Activated CD4-positive, alpha-beta memory T cell treated with anti-CD3 and anti-CD28 coated beads for 36 hours (primary cell): ENCODE measurements at regions of chr10 and their contacts with region 1.

Region 1: GRCh38 chr10:3785257-3785850 is 345 bp upstream of the KLF6 start:
- DNase-seq: peak; percentile 100
- H3K4me3 Mint-ChIP-seq: peak overlapping the region; percentile 96
- H3K27ac Mint-ChIP-seq: peak overlapping the region; percentile 98
- H3K4me1 Mint-ChIP-seq: peaks cover 27% of the 10 kb centered on the region
- H3K27me3 Mint-ChIP-seq: peaks cover 2% of the 10 kb centered on the region

Region 2: DNA sequence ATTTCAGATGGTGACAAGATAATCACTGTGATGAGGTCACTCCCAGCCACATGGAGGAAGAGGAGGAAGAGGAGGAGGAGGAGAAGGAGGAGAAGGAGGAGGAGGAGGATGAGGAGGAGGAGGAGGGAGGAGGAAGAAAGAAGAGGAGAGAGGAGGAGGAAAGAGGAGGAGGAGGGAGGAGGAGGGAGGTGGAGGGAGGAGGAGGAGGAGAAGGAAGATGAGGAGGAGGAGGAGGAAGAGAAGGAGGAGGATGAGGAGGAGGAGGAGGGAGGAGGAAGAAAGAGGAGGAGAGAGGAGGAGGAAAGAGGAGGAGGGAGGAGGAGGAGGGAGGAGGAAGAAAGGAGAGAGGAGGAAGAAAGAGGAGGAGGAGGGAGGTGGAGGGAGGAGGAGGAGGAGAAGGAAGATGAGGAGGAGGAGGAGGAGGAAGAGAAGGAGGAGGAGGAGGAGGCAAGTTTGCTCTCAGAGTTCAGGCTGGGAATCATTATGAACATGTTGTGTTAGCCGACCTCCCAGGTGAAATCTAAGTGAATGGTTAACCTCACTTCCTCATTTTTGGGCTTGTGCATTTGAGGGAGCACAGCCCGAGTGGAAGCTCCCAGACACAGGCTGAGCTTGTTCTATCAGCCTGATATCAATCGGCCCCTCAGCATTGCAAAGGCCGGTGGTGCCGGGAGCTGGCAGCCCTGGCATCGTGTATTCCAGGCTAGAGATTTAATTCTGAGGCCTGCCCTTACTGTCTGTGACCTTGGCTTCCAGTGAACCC is 376.6 kb before region 1 on chr10:
- CTCF ChIA-PET with region 1: no interaction called
- POLR2A ChIA-PET with region 1: no interaction called
- intact Hi-C with region 1: no loop called
- DNase-seq: no peak
- H3K4me3 Mint-ChIP-seq: no peak overlapping the region
- H3K27ac Mint-ChIP-seq: no peak overlapping the region
- H3K4me1 Mint-ChIP-seq: peaks cover 4% of the 10 kb centered on the region
- H3K27me3 Mint-ChIP-seq: no peaks in the 10 kb centered on the region

Region 3: DNA sequence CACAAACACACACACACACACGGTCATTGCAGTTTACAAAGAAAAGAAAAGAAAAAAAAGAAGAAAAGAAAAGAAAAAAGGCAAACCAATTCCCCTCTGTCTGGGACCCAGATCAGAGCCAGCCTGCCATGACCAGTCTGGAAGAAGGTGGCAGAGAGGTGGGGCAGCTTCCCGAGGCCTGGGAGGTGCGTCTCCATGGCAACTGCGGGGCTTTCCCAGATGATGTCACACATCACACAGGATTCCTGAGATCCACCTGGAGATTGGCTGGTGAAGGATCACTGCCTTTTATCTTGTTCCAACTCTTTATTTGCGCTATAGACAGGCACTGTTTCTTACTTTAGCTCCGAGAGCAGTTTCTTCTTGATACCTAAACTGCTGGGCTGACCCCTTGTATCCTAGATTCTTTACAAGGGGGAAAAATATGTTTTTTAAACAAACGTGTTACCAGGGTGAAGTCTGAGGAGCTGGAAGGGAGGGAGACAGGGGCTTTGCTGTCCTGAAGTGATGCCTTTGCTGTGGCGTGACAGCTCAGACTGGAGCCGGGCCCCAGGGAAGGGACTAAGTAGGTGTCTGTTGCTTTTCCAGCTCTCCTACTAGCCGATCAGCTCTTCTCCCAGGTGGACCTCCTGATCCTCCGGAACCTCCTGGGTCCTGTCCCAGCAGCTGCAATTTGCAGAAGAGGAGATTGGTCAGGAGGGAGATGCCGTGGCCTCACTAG is 298.8 kb before region 1 on chr10:
- CTCF ChIA-PET with region 1: no interaction called
- POLR2A ChIA-PET with region 1: no interaction called
- intact Hi-C with region 1: no loop called
- DNase-seq: no peak
- H3K4me3 Mint-ChIP-seq: no peak overlapping the region
- H3K27ac Mint-ChIP-seq: no peak overlapping the region
- H3K4me1 Mint-ChIP-seq: peaks cover 26% of the 10 kb centered on the region
- H3K27me3 Mint-ChIP-seq: peaks cover 3% of the 10 kb centered on the region

Region 4: GRCh38 chr10:3563298-3563697 is 222.1 kb before region 1 on chr10:
- CTCF ChIA-PET with region 1: no interaction called
- POLR2A ChIA-PET with region 1: no interaction called
- intact Hi-C with region 1: loop called (anchors 5 kb)
- DNase-seq: peak; percentile 82
- H3K4me3 Mint-ChIP-seq: no peak overlapping the region
- H3K27ac Mint-ChIP-seq: peak overlapping the region; percentile 35
- H3K4me1 Mint-ChIP-seq: peaks cover 27% of the 10 kb centered on the region
- H3K27me3 Mint-ChIP-seq: no peaks in the 10 kb centered on the region

Region 5: GRCh38 chr10:3805791-3806461 is 20.6 kb after region 1 on chr10:
- CTCF ChIA-PET with region 1: interaction called, 5 read pairs
- POLR2A ChIA-PET with region 1: interaction called, 405 read pairs
- intact Hi-C with region 1: loop called (anchors 1 kb)
- DNase-seq: peak; percentile 72
- H3K4me3 Mint-ChIP-seq: peak overlapping the region; percentile 68
- H3K27ac Mint-ChIP-seq: no peak overlapping the region
- H3K4me1 Mint-ChIP-seq: peaks cover 62% of the 10 kb centered on the region
- H3K27me3 Mint-ChIP-seq: no peaks in the 10 kb centered on the region

Region 6: DNA sequence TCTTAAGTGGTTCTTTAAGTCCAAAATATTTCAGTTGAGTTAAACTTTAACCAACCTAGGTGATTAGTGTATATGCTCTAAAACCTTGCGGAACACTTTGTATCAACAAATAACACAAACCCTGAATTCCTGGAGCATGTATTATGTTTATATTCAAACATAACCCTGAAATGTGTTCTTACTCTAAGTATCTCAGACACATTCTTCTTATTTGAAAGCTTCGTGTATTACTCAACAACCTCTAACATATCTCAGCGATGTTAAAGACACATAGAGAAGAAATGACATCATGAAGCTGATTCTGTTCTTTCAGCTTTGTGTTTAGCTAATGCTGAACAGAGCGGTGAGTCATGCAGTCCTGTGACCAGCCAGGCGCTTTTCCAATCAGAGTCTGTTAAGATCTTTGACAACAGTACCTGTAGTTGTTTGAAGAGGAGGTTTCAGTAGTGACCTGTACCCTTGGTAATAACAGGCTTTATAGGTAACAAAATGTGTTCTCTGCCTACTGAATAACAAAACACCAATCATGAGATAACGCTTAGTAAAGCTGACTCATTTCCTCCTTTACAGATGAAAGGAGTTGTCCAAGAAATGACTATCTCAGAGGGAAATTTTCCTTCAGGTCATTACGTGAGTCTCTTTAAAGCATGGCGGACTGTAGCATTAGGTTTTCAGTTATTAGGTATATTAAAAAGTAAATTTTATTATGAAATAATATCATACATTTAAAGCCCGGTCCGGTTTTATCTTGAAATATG is 67.0 kb after region 1 on chr10:
- CTCF ChIA-PET with region 1: interaction called, 8 read pairs
- POLR2A ChIA-PET with region 1: interaction called, 103 read pairs
- intact Hi-C with region 1: loop called (anchors 1 kb)
- DNase-seq: peak; percentile 86
- H3K4me3 Mint-ChIP-seq: peak overlapping the region; percentile 36
- H3K27ac Mint-ChIP-seq: peak overlapping the region; percentile 92
- H3K4me1 Mint-ChIP-seq: peaks cover 53% of the 10 kb centered on the region
- H3K27me3 Mint-ChIP-seq: no peaks in the 10 kb centered on the region

Region 7: DNA sequence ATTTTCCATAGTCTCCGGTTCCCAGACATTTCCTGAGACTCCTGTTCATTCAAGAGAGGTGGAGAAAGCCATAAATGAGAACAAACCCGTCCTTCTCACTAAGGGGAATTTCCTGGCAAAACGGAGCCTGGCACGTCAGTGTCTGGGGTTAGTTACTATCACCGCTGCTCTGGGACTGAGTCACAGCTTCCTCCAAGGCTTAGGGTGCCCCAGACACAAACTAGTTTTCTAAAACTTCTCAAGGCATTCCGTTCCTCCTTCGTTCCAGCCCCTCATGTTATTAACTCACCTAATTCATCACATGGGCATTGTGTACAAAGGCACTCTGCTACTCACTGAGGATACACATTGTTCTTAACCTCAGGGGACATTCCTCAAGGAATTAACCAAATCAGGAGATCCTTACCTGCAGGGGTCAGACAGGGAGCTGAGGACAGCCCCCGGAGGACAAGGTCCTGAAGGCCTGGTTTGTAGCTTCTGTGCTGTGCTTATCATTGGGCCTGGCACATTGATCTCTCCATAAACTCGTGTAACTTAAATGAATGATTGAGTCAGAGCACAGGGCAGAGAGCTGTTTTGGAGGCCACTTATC is 102.6 kb after region 1 on chr10:
- CTCF ChIA-PET with region 1: no interaction called
- POLR2A ChIA-PET with region 1: interaction called, 28 read pairs
- intact Hi-C with region 1: no loop called
- DNase-seq: peak; percentile 87
- H3K4me3 Mint-ChIP-seq: peak overlapping the region; percentile 58
- H3K27ac Mint-ChIP-seq: peak overlapping the region; percentile 96
- H3K4me1 Mint-ChIP-seq: peaks cover 68% of the 10 kb centered on the region
- H3K27me3 Mint-ChIP-seq: no peaks in the 10 kb centered on the region

Region 8: DNA sequence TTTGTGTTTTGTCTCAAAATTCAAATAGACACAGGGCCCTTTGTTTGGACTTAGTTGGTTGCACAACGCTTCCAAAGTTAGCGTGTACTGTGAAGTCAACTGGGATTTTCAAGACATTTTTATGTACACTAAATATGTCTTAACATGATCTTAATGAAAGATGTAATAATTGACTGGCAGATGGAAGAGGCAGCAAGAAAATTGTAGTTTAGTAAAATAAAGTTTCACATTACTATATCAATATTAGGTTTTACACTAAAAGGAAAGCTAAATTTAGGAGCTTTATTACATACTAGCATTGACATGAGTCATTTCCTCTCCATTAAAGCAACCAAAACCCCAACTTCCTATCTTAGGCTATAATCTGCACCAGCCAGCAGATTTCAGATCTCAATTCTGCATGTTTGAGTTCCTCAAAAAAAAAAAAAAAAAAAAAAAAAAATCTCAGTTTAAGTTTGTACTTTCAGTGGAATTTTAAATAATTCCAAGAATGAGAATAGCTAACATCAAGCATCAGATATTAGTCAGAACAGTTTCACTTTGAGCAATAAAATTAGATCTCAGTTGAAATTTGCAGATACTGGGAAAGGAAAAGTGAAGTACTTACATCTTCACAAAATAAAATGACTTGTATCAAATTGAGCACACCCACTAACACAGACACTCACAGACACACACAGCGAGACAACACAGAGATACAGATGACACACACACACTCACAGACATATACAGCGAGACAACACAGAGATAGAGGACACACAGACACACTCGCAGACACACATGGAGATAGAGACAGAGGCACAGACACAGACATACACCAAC is 346.3 kb after region 1 on chr10:
- CTCF ChIA-PET with region 1: no interaction called
- POLR2A ChIA-PET with region 1: interaction called, 13 read pairs
- intact Hi-C with region 1: no loop called
- DNase-seq: peak; percentile 42
- H3K4me3 Mint-ChIP-seq: no peak overlapping the region
- H3K27ac Mint-ChIP-seq: no peak overlapping the region
- H3K4me1 Mint-ChIP-seq: peaks cover 39% of the 10 kb centered on the region
- H3K27me3 Mint-ChIP-seq: no peaks in the 10 kb centered on the region